Lower leg skin (tissue), 4 donors: ENCODE measurements at regions of chr12 and their contacts with region 1.

Region 1: DNA sequence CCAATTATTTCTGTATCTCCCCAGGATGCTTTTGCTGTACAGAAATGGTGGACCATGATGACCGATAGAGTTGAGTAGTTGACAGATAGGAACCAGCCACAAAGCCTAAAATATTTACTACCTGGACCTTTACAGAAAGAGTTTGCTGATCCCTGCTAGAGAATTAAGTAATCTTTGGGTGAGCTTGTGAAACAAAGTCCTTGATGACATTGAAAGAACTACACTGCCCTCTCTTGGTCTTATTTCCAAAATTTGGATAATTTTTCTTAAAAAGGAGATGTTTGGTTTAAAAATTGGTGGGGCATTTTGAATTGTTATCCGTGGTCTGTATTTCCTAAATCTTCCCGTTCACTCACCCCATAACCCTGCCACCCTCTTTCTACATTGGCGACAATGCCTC is 13.7 kb upstream of the TCTN1 start:
- DNase-seq: no peak
- H3K4me3 ChIP-seq: no peak overlapping the region
- CTCF ChIP-seq: no peak
- POLR2A ChIP-seq: no peak

Region 2: DNA sequence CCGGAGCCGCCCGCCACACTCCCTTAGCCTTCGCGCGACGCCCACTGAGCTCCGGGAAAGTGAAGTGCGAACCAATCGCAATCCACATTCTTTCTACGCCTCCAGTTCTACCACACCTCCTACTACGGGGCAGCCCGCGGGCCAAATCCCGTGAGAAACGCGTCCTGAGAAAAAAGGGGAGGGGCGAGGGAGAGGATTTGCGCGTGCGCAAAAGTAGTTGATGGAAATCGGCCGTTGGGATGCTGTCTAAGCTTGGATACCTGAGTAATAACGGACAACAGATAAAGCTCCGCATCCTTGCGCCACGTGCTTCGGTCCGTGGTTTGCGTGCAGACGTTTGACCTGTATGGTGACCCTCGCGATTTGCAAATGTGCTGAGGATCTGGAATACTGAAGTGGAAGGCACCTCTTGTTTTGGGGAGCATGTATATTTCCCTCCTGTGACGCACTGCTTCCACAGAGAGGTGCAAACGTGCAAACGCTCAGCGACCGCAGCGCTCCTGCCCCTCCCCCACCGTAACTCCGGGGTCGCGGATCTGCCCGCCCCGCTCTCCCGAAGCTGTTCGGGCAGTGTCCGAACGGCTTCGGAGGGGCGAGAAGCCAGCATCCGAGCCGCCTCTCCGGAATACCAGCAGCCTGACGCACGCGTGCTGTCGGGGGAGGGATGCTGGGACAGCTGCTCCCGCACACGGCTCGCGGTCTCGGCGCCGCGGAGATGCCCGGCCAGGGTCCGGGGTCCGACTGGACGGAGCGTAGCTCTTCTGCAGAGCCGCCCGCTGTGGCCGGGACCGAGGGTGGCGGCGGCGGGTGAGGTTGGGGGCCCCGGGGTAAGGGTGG is 131.8 kb before region 1 on chr12 and contains the starts of genes FAM216A and GPN3:
- intact Hi-C with region 1: loop called (anchors 10 kb)
- DNase-seq: peak; percentile 97 to 99
- H3K4me3 ChIP-seq: peak within 1 kb of the TSS; percentile 53
- CTCF ChIP-seq: no peak
- POLR2A ChIP-seq: no peak
- total RNA-seq, gene FAM216A: 0.30 to 1.9 (median 0.85) TPM
- total RNA-seq, gene GPN3: 12.2 to 16.2 (median 14.5) TPM

Region 3: DNA sequence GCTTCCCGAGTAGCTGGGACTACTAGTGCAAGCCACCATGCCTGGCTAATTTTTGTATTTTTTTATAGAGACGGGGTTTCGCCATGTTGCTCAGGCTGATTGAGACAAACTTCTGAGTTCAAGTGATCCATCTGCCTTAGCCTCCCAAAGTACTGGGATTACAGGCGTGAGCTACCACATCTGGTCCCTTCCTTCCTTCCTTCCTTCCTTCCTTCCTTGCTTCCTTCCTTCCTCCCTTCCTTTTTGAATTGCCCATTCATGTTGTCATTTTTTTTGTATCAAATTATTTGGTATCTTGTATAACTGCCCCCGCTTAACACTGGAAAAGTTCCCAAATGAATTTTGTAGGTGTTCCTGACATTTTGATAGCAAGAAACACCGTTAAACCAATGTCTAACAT is 86.4 kb before region 1 on chr12:
- intact Hi-C with region 1: loop called (anchors 5 kb)
- DNase-seq: no peak
- H3K4me3 ChIP-seq: no peak overlapping the region
- CTCF ChIP-seq: no peak
- POLR2A ChIP-seq: no peak

Region 4: DNA sequence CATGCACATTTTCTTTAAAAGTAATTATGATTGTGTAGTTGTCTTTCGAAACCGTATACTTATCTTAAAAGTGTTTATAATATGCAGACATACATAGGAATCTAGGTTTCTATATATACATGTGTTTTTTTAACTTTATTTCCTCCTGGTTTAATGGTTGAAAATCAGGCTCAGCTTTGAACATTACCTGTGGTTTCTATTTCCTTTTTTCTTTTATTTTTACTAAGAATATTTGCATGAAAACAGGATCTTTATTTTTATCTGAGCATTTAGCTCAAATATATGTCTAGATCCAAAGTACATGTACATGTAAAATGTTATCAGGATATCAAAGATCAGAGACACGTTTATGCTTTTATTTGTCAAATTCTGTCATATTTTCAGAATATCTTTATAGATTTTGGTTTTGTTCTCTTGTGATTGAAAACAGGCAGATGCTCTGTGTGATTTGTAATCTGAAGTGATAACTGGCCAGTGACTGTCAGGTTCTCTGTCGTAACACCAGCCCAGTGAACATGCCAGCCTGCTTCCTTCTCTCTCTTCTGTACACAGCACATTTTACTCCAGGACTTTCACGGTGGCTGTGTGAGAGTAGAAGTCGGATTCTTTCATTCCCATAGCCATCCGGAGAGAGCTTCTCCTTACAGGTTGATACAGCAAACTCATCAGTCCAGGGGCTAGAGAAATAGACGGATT is 27.4 kb after region 1 on chr12:
- intact Hi-C with region 1: no loop called
- DNase-seq: no peak
- H3K4me3 ChIP-seq: no peak overlapping the region
- CTCF ChIP-seq: no peak
- POLR2A ChIP-seq: no peak

Region 5: DNA sequence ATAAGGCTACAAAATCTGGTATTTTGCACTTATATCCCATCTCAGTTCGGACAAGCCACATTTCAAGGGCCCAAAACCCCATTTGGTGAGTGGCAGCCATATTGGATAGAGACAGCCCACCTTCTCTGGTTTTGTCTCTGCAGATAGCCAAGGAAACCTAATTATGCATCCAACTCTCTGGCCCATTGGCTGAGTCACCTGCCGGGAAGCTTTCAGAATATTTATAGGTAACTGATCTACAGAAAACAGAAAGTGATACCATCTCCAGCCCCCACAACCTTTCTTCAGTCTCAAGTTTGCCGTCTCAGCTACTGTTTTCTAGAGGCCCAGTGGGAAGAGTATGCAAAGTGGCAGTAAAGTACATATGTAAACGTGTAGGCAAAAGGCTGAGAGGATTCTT is 176.2 kb after region 1 on chr12:
- intact Hi-C with region 1: no loop called
- DNase-seq: no peak
- H3K4me3 ChIP-seq: no peak overlapping the region
- CTCF ChIP-seq: no peak
- POLR2A ChIP-seq: no peak